HepG2 (cell line): ENCODE measurements at regions of chr2 and their contacts with region 1.

Region 1: DNA sequence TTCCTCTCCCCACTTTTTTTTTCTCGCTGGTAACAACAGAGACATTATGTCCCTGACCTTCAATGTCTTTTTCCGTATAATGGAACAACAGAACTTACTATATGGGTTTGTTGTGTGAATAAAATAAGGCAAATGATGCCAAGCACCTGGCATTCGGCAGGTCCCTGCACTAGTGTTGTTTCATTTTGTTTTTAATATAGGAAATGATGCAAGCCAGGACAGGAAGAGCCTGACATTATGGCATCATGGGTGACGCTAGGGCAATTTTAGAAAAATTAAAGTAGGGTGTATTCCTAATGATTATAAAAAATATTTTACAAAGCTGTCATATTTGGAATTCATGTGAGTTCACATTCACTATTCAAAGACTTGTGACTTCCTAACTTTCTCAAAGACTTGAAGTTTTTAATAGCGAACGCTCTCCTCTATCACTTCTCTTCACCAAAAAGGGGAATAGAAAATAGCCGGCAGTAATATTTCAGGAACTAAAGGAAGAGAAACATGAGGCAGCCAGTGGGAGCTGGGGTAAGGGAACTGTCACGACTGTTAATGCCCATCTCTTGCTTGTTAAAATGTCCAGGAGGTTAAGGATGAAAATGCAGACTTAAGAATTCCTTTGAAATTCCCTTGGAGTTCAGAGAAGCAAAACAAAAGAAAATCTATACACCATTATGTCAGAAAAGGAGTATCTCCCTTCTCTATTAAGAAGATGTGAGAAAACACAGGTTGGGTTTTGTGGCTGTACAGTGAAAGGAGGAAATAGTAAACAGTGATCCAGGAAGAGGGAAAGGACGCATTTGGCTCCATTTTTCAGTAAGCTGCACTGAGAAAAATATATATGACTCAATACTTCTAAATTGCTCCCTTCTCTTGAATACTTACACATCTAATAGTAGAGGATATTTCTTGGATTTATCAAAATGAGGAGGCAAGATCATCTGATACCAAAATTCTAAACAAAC is 60.2 kb downstream of the DPP4 start:
- DNase-seq: no peak
- ATAC-seq: no peak
- H3K4me3 ChIP-seq: no peak overlapping the region
- H3K27ac ChIP-seq: no peak overlapping the region
- H3K4me1 ChIP-seq: peaks cover 28% of the 10 kb centered on the region
- H3K27me3 ChIP-seq: no peaks in the 10 kb centered on the region
- CTCF ChIP-seq: no peak
- EP300 ChIP-seq: no peak
- POLR2A ChIP-seq: no peak
- RAD21 ChIP-seq: no peak

Region 2: DNA sequence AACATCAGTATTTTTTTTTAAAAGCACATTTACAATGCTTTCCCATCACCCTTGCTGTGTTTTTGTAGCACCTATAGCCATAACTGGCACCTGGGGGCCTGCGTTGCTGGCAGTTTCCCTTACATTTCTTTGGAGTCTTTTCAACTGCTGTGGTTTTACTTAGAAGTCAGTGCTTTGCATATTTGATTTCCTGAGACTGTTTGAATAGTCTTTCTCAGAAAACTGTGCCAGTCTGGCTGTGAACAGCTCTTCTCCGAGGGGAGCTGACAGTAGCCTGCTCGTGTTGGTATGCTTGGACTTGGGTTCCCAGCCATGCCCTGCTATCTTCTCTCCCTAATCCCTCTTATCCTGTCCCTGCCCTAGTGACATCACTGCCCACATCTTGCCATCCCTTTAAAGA is 21.3 kb before region 1 on chr2:
- CTCF ChIA-PET with region 1: no interaction called
- POLR2A ChIA-PET with region 1: no interaction called
- in situ Hi-C with region 1: no loop called
- intact Hi-C with region 1: loop called (anchors 1 kb)
- DNase-seq: no peak
- ATAC-seq: no peak
- H3K4me3 ChIP-seq: no peak overlapping the region
- H3K27ac ChIP-seq: no peak overlapping the region
- H3K4me1 ChIP-seq: peaks cover 21% of the 10 kb centered on the region
- H3K27me3 ChIP-seq: no peaks in the 10 kb centered on the region
- CTCF ChIP-seq: no peak
- EP300 ChIP-seq: no peak
- POLR2A ChIP-seq: no peak
- RAD21 ChIP-seq: no peak